MCF 10A (cell line): ENCODE measurements at regions of chr22 and their contacts with region 1.

Region 1: DNA sequence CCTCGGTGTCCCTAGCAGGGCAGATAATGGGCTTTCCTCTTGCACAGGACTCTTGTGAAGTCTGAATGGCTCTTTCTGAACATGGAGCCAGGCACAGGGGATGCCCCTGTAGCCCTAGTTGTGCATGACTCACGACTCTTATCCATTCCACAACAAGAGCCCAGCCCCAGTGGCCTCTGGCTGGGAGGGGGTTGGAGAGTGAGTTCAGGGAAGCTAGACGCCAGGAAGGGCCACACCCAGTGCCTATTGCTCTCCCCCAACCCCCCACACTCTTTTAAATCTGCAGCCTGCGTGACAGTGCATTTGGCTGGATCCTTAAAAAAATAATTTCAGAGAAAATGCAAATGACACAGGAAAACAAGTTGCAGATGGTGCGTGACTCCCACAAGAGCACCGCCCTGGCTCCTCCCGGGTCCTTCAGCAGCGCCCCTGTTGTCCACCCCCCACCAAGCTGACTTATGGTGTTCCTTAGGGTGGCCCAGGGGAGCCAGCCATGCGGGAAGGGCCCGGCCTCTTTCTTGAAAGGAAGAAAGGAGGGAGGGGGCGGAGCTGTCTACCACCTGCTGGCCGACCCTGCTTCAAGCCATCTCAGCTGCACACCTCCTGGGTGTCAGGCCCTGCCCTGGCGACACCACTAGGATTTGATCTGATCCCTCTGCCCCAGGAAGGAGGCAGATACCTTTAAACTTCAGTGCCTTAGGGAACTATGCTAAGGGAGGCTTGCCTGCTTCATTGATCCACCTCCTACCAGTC is 74.7 kb downstream of the MN1 start:
- DNase-seq: peak; percentile 84
- H3K4me3 Mint-ChIP-seq: peak overlapping the region; percentile 18
- H3K27ac Mint-ChIP-seq: peak overlapping the region; percentile 24
- H3K4me1 Mint-ChIP-seq: peaks cover 20% of the 10 kb centered on the region
- H3K27me3 Mint-ChIP-seq: no peaks in the 10 kb centered on the region
- CTCF ChIP-seq: no peak

Region 2: GRCh38 chr22:27748751-27749191 is 21.9 kb after region 1 on chr22:
- CTCF ChIA-PET with region 1: interaction called, 5 read pairs
- POLR2A ChIA-PET with region 1: interaction called, 7 read pairs
- intact Hi-C with region 1: loop called (anchors 1 kb)
- DNase-seq: peak; percentile 82
- H3K4me3 Mint-ChIP-seq: peak overlapping the region; percentile 44
- H3K27ac Mint-ChIP-seq: peak overlapping the region; percentile 88
- H3K4me1 Mint-ChIP-seq: peaks cover 61% of the 10 kb centered on the region
- H3K27me3 Mint-ChIP-seq: no peaks in the 10 kb centered on the region
- CTCF ChIP-seq: no peak

Region 3: DNA sequence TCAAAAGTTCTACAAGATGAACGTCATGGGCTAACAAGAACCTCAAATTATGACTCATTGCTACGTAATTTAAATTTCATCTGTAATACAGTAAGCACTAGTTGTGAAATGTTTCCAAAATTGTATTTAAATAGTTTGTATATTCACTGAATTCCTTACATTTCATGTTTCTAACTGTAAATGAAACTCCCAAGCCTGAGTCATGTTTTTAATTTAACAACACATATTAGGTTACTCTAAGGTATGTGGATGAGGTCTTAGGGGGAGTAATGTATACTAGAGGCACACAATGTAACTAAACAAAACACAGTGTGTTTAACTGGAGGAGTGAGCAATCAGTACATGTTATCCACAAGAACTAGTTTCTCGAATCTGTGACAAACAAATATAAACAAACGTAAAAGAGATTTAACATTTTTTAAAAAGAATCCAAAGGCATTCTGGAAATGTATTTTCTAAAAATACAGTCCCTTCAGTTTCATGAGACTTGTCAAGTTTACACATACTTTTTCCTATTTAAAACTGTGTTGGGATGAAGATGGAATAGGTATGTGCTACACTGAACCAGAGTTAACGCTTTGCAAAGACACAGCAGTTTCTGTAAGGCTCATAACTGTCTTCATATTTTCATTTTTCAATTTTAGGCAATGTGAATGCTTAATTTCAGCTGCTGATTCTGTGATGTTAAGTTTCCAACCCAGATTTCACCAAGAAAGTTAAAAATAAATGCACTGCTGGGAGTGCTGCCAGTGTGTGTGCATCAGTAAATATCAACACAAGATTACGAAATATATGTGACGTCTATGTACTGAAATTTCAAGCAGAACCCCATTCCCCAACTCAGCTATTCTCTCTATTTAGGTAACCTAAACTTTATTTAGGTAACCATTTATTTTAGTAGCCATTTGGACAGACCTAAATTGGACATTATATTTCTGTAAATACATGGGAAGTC is 139.5 kb after region 1 on chr22:
- CTCF ChIA-PET with region 1: no interaction called
- POLR2A ChIA-PET with region 1: no interaction called
- intact Hi-C with region 1: loop called (anchors 10 kb)
- DNase-seq: peak; percentile 68
- H3K4me3 Mint-ChIP-seq: peak overlapping the region; percentile 33
- H3K27ac Mint-ChIP-seq: peak overlapping the region; percentile 98
- H3K4me1 Mint-ChIP-seq: peaks cover 35% of the 10 kb centered on the region
- H3K27me3 Mint-ChIP-seq: no peaks in the 10 kb centered on the region
- CTCF ChIP-seq: no peak